ENCODE measurements at regions of chr14 and their contacts with region 1.

Region 1: DNA sequence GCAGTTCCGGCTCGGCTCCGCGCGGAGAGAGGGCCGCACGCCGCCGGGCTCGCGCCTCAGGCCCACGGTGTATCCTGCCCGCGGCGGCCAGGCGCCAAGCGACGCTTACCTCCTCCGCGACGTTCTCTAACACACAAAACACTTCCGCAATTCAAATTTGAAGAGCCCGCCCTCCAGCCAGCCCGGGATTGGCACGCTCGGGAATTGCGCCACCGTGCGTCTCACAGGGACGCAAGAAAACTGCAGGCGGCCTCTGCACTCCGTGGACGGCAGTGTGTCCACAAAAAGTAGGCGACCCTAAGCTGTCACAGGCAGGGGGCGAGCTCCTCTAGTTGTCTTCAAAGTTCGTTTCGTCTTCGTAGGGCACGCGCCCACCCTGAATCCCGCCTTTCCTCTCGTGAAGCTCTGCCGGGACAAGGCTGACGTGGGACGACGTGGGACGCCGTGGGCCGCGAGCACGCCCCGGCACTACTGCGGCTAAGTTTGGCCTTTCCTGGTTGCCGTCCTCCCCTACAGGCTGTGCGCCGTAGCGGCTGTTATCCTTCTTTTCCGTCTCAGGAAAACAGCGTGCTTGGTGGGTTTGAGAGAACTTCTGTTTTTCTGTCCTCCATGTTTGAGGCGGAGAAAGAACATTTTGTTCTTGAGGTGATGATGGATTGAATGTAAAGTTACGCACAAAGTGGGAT is at the start of gene MIS18BP1:
- DNase-seq: peak; percentile 97
- H3K4me3 ChIP-seq: peak within 1 kb of the TSS; percentile 50 to 89 (median 64)
- H3K27ac ChIP-seq: peak within 1 kb of the TSS; percentile 87 to 93 (median 90)
- H3K4me1 ChIP-seq: peaks cover 5 to 31% (median 13%) of the 10 kb centered on the region in 4 donors
- H3K27me3 ChIP-seq: no peaks in the 10 kb centered on the region
- CTCF ChIP-seq: peak; percentile 71 to 92 (median 77)
- EP300 ChIP-seq: no peak
- POLR2A ChIP-seq: peak; percentile 82
- total RNA-seq, gene MIS18BP1: 23.5 to 61.7 (median 38.4) TPM

Region 2: DNA sequence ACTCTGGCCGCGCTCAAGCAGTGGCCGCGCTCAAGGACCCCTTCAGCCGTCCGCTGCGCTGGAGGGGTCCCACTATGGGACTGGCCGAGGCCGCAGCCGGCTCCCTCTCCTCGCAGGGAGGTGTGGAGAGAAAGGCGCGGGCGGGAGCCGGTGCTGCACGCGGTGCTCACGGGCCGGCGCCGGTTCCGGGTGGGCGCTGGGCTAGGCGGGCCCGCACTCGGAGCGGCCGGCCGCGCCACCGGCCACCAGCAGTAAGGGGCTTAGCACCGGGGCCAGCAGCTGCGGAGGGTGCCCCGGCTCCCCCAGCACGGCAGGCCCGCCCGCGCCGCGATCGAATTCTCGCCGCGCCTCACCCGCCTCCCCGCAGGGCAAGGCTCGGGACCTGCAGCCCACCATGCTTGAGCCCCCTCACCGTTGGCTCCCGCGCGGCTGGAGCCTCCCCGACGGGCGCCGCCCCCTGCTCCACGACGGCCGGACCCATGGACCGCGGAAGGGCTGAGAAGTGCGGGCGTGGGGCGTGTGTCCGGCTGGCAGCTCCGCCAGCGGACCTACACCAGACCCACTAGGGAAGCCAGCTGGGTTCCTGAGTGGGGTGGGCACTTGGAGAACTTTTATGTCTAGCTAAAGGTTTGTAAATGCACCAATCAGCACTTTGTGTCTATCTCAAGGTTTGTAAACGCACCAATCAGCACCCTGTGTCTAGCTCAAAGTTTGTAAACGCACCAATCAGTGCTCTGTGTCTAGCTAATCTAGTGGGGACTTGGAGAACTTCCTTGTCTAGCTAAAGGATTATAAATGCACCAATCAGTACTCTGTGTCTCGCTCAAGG is 341.0 kb before region 1 on chr14:
- in situ Hi-C with region 1: loop called in 2 of 4 experiments (anchors 25 kb)
- intact Hi-C with region 1: no loop called
- DNase-seq: no peak
- H3K4me3 ChIP-seq: peak overlapping the region; percentile 28 to 56 (median 38)
- H3K27ac ChIP-seq: no peak overlapping the region
- H3K4me1 ChIP-seq: peaks cover 0 to 12% (median 0%) of the 10 kb centered on the region in 4 donors
- H3K27me3 ChIP-seq: peaks cover 35% of the 10 kb centered on the region
- CTCF ChIP-seq: no peak
- EP300 ChIP-seq: no peak
- POLR2A ChIP-seq: no peak

Region 3: GRCh38 chr14:45103806-45104205 is 149.4 kb before region 1 on chr14:
- in situ Hi-C with region 1: no loop called
- intact Hi-C with region 1: no loop called
- DNase-seq: no peak
- H3K4me3 ChIP-seq: no peak overlapping the region
- H3K27ac ChIP-seq: no peak overlapping the region
- H3K4me1 ChIP-seq: peaks cover 0 to 13% (median 6%) of the 10 kb centered on the region in 4 donors
- H3K27me3 ChIP-seq: no peaks in the 10 kb centered on the region
- CTCF ChIP-seq: no peak
- EP300 ChIP-seq: no peak
- POLR2A ChIP-seq: no peak